ENCODE measurements at regions of chr13 and their contacts with region 1.

Region 1: DNA sequence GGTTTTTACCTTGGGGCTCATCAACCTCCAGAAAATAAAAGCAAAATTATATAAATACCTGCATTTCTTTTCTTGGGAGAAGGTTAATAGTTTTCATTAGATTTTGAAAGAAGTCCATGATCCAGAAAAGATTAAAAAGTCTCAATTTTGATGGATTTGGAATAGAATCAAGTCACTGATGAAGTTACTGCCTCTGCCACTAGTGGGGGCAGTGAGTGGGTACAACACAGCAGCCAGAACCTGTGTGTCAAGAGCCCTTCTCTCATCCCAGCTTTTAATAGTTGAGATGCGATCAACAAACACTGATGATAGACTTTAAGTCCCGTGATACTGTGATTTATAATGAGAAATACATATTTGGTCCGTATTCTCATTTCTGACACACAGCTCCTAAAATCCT is 686.7 kb downstream of the DIAPH3 start:
- DNase-seq: no peak
- ATAC-seq: peak; percentile 54; the same call in 1 of the 3 replicates
- H3K4me3 ChIP-seq: no peak overlapping the region
- H3K27ac ChIP-seq: no peak overlapping the region
- H3K4me1 ChIP-seq: no peaks in the 10 kb centered on the region
- H3K27me3 ChIP-seq: no peaks in the 10 kb centered on the region
- CTCF ChIP-seq: peak in 2 of 3 experiments; percentile 35 to 49; a peak in 3 of 6 replicates
- EP300 ChIP-seq: no peak
- POLR2A ChIP-seq: no peak
- RAD21 ChIP-seq: no peak

Region 2: GRCh38 chr13:60335531-60335930 is 858.5 kb after region 1 on chr13:
- CTCF ChIA-PET with region 1: no interaction called
- POLR2A ChIA-PET with region 1: no interaction called
- RAD21 ChIA-PET with region 1: no interaction called
- SMC1A ChIA-PET with region 1: no interaction called
- in situ Hi-C with region 1: no loop called
- intact Hi-C with region 1: loop called (anchors 10 kb)
- DNase-seq: no peak
- ATAC-seq: no peak
- H3K4me3 ChIP-seq: no peak overlapping the region
- H3K27ac ChIP-seq: no peak overlapping the region
- H3K4me1 ChIP-seq: no peaks in the 10 kb centered on the region
- H3K27me3 ChIP-seq: no peaks in the 10 kb centered on the region
- CTCF ChIP-seq: peak in 2 of 3 experiments; percentile 23 to 47; a peak in 4 of 6 replicates
- EP300 ChIP-seq: no peak
- POLR2A ChIP-seq: no peak
- RAD21 ChIP-seq: peak; percentile 56